ENCODE measurements at regions of chr21 and their contacts with region 1.

Region 1: GRCh38 chr21:24514081-24514733 is 1093.1 kb downstream of the MRPL39 start:
- DNase-seq: no peak
- H3K4me3 ChIP-seq: no peak overlapping the region
- H3K27ac ChIP-seq: no peak overlapping the region
- H3K4me1 ChIP-seq: no peaks in the 10 kb centered on the region
- H3K27me3 ChIP-seq: no peaks in the 10 kb centered on the region
- CTCF ChIP-seq: peak; percentile 61

Region 2: GRCh38 chr21:23853796-23854379 is 660.3 kb before region 1 on chr21:
- CTCF ChIA-PET with region 1: no interaction called
- POLR2A ChIA-PET with region 1: no interaction called
- intact Hi-C with region 1: loop called (anchors 10 kb)
- DNase-seq: no peak
- H3K4me3 ChIP-seq: no peak overlapping the region
- H3K27ac ChIP-seq: no peak overlapping the region
- H3K4me1 ChIP-seq: no peaks in the 10 kb centered on the region
- H3K27me3 ChIP-seq: no peaks in the 10 kb centered on the region
- CTCF ChIP-seq: peak; percentile 39; the same call in 1 of the 2 replicates

Region 3: DNA sequence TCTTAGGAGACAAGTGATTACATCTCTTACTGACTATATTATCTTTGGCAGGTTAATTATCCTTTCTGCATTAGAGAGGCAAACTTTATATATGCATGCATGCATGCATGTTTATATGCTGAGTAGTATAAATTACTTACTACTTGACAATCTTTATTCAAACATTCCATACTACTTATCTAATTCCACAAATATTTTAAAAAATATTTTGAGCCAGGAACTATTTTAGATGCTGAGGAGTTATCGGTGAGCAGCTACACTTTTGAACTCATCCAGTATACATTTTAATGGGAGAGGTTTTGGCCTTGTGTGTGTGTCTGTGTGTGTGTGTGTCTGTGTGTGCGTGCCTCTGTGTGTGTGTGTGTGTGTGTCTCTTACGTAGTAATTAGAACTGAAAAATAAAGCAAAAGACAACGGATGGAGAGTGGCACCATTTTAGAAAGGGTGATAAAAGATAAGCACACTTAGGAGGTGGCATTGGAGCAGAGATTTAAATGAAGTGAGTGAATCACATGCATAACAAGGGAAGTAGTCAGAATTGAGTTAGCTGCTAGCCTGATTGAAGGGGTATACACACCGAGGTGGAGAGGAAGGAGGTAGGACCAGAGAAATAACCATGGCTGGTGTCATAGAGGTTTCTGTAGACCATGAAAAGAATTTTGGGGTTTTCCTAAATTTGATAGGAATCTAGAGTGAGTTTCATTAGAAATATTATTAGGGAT is 395.3 kb before region 1 on chr21:
- CTCF ChIA-PET with region 1: no interaction called
- POLR2A ChIA-PET with region 1: no interaction called
- intact Hi-C with region 1: loop called (anchors 10 kb)
- DNase-seq: no peak
- H3K4me3 ChIP-seq: no peak overlapping the region
- H3K27ac ChIP-seq: no peak overlapping the region
- H3K4me1 ChIP-seq: no peaks in the 10 kb centered on the region
- H3K27me3 ChIP-seq: no peaks in the 10 kb centered on the region
- CTCF ChIP-seq: no peak

Region 4: DNA sequence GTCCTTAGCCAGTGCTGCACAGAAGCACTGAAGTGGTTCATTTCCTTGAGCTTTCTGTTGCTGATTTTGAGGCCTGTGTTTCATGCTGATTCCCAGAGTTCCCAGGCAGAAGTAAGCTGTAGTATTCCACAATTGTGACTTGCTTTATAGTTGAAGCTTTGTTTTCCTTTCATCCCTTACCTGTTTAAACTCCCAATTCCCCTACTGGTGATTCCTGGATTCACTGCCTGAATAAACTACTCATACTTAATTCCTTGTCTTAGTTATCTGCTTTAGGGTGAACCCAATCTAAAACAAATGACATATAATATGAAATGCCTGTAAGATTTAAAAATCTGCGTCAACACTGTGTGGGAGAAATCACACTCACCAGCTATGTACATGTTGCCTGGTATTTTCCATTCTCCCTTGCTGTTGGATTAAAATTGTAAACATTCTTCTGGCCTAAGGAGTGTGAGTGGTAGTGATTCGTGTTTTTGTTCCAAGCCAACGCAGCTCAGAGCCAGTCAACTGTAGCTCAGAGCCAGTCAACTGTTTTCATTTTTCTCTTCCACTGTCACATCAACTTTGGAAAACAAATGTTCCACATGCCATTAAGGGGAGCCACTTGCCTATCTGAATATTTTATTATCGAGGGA is 213.7 kb after region 1 on chr21:
- CTCF ChIA-PET with region 1: no interaction called
- POLR2A ChIA-PET with region 1: no interaction called
- intact Hi-C with region 1: no loop called
- DNase-seq: no peak
- H3K4me3 ChIP-seq: no peak overlapping the region
- H3K27ac ChIP-seq: no peak overlapping the region
- H3K4me1 ChIP-seq: no peaks in the 10 kb centered on the region
- H3K27me3 ChIP-seq: no peaks in the 10 kb centered on the region
- CTCF ChIP-seq: no peak